Activated naive CD4-positive, alpha-beta T cell treated with anti-CD3 and anti-CD28 coated beads, Interleukin-2, amount 10 ng/mL, durations not matched to agents 7 days and 5 days (primary cell): ENCODE measurements at regions of chr7 and their contacts with region 1.

Region 1: DNA sequence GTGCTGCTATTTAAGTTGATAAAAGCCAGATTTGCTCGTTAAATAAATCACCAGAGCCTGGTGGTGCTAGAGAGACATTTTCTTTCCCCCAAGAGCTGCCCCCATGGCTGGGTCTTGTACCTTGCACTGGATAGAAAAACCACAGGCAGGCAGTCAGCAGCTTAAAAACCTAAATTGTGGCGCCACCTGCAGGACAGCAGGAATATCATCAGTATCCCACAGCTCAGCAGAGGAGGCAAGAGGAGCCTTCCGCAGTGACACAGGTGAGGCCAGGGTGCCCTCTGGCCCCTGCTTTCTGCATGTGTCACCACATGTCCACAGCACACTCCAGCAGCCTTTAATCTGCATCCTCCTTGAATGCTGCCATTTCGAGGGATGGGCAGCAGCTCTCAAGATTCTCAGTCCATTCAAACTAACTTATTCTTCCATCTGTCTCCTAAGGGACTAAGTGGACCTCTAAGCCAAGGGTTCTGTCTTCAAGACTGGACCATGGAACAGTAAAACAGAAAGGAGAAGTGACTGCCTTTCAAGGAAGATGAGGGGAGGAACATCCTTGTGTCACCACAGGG is 4.5 kb upstream of the PLXNA4 start:
- DNase-seq: peak; percentile 87
- H3K4me3 Mint-ChIP-seq: no peak overlapping the region
- H3K27ac Mint-ChIP-seq: no peak overlapping the region
- H3K4me1 Mint-ChIP-seq: peaks cover 13% of the 10 kb centered on the region
- H3K27me3 Mint-ChIP-seq: peaks cover 70% of the 10 kb centered on the region

Region 2: DNA sequence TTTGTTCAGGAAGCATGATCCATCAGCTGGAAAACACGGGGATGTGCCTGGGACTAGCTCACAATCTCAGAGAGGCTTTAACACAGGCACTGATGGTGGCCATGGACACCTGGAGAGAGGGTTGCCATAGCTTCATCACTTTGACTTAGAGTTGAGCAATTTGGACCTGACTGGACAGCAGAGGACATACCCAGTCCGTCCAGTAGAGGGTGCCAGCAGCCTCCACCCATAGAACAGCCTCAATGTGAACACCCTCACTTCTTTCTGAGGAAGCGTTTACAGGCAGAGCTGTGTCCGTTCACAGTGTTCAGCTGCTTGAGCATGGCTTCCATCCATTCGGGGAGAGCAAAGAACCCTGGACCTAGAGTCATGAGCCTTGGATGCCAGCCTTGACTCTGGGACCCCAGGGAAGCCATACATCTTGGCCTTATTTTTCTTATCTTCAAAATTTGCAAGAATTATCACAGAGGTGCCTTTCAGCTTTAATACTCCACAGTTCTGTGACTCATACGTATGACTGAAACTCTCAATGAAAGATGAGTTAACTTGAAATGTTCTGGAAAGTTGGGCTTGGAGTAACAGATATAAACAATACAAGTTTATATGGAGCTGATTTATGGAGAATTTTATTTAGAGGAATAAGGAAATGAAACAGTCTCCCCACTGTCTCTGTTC is 721.5 kb before region 1 on chr7:
- CTCF ChIA-PET with region 1: interaction called, 11 read pairs
- DNase-seq: peak; percentile 67
- H3K4me3 Mint-ChIP-seq: no peak overlapping the region
- H3K27ac Mint-ChIP-seq: no peak overlapping the region
- H3K4me1 Mint-ChIP-seq: no peaks in the 10 kb centered on the region
- H3K27me3 Mint-ChIP-seq: no peaks in the 10 kb centered on the region

Region 3: DNA sequence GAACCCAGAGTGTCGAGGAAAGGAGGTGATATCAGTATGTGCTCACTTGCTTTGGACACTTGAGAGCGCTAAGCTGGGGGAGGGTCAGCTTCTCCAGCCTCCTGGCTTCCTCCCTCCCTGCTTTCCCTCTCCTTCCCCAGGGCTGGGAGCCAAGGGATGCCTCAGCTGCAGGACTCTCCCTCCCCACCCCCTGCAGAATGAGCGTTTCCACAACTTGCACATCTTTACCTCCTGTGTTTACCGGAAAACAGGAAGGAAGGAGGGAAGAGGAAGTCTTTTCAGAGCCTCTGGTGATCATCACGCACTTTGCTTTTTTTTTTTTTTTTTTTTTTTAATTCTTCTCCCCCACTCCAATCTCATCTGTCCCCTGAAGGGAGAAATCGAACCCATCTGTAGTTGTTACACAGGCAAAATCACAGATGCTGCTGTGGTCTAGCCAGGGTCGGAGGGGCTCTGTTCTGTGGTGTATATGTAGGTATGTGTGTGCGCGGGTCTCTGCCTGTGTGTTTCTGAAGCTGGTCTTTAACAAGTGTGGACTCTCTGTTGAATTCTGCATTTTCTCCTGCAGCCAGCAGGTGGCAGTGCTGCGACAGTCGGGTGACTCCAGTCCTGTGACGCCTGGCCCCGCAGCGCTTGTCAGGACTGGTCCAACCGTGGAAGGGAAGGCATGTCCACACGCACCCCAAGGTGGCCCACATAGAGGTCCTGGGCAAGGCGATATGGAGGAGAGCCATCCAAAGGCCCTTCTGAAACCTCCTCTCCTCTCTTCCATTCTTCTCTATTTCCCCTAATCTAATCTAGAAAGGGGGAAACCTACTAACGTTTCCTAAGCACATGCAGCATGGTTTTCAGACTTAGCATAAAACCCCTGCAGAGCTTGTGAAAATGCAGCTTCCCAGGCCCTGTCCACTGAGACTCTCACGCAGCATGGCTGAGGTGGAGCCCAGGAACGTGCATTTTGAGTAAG is 262.2 kb before region 1 on chr7:
- CTCF ChIA-PET with region 1: interaction called, 115 read pairs
- DNase-seq: peak; percentile 88
- H3K4me3 Mint-ChIP-seq: peak overlapping the region; percentile 4
- H3K27ac Mint-ChIP-seq: no peak overlapping the region
- H3K4me1 Mint-ChIP-seq: peaks cover 50% of the 10 kb centered on the region
- H3K27me3 Mint-ChIP-seq: peaks cover 69% of the 10 kb centered on the region

Region 4: DNA sequence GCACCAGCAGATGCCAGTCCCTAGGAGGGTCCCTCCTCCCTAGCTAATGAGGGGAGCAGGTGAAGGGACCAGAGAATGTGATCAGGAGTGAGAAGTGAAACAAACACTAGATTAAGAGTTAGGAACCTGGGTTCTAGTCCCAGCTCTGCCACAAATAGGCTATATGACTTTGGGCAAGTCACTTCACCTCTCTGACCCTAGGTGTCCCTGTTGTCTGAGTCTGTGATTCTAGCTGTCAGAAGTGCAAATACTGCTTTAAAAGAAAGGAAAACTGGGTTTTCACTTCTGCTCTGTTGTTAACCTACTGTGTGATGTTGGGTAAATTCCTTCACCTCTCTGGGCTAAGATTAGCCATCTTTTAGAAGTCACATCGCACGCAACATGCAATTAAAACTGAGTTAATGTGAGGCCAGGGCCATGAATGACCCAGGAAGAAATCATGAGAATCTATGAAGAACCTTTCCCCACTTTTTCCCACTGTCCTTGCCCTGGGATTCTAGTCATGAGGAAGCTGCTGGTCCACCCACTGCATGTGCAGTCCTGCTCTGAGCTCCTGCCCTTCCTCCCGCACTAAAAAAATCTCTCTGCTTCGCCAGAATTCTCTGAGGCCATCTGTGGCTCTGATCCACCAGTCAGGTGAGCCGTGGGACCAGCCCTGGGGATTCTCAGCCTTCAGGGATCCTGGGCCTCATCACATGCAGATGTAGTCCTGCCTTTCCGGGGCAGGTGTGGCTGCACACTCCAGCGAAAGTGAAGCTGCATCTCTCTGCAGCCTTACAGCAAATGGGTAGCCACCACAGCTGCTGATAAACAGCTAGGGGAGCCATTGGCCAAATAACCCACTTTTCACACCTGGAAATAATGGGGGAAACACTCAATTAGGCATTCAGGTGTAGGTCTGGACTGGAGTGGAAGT is 186.3 kb before region 1 on chr7:
- CTCF ChIA-PET with region 1: interaction called, 240 read pairs
- DNase-seq: peak; percentile 59
- H3K4me3 Mint-ChIP-seq: no peak overlapping the region
- H3K27ac Mint-ChIP-seq: peak overlapping the region; percentile 61
- H3K4me1 Mint-ChIP-seq: peaks cover 39% of the 10 kb centered on the region
- H3K27me3 Mint-ChIP-seq: peaks cover 31% of the 10 kb centered on the region

Region 5: GRCh38 chr7:132488634-132489302 is 92.0 kb before region 1 on chr7:
- CTCF ChIA-PET with region 1: no interaction called
- DNase-seq: no peak
- H3K4me3 Mint-ChIP-seq: no peak overlapping the region
- H3K27ac Mint-ChIP-seq: no peak overlapping the region
- H3K4me1 Mint-ChIP-seq: peaks cover 81% of the 10 kb centered on the region
- H3K27me3 Mint-ChIP-seq: peaks cover 13% of the 10 kb centered on the region

Region 6: GRCh38 chr7:132518102-132518838 is 62.5 kb before region 1 on chr7:
- CTCF ChIA-PET with region 1: interaction called, 10 read pairs
- DNase-seq: no peak
- H3K4me3 Mint-ChIP-seq: no peak overlapping the region
- H3K27ac Mint-ChIP-seq: no peak overlapping the region
- H3K4me1 Mint-ChIP-seq: peaks cover 29% of the 10 kb centered on the region
- H3K27me3 Mint-ChIP-seq: peaks cover 34% of the 10 kb centered on the region

Region 7: DNA sequence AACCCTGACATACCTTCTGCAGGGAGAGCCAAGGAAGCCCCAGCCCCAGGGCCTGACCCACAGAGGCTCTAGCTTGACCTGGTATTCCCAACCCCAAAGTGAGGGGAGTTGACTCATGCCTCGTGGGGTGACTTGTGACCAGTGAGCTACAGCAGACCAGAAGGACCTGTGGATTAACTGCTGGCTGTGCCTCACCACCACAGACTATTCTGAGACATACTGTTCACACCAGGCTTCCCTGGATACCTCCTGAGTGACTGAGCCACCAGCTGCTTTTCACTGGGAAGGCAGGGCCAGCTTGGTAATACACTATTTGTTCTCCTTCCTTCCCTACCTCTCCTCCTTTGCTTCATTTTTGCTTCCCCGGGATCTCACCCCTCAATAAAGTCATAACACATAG is 11.8 kb before region 1 on chr7:
- CTCF ChIA-PET with region 1: interaction called, 11 read pairs
- DNase-seq: no peak
- H3K4me3 Mint-ChIP-seq: no peak overlapping the region
- H3K27ac Mint-ChIP-seq: no peak overlapping the region
- H3K4me1 Mint-ChIP-seq: peaks cover 27% of the 10 kb centered on the region
- H3K27me3 Mint-ChIP-seq: peaks cover 94% of the 10 kb centered on the region

Region 8: GRCh38 chr7:132636616-132637015 is 55.8 kb after region 1 on chr7:
- CTCF ChIA-PET with region 1: no interaction called
- DNase-seq: no peak
- H3K4me3 Mint-ChIP-seq: no peak overlapping the region
- H3K27ac Mint-ChIP-seq: no peak overlapping the region
- H3K4me1 Mint-ChIP-seq: no peaks in the 10 kb centered on the region
- H3K27me3 Mint-ChIP-seq: peaks cover 3% of the 10 kb centered on the region